Activated B cell treated with CpG ODN at 0.5 μM for 24 hours (primary cell): ENCODE measurements at regions of chr7 and their contacts with region 1.

Region 1: GRCh38 chr7:97117372-97118188 is at the start of gene SDHAF3:
- DNase-seq: peak; percentile 96
- ATAC-seq: peak; percentile 87
- H3K4me3 Mint-ChIP-seq: peak within 1 kb of the TSS; percentile 95
- H3K27ac Mint-ChIP-seq: peak within 1 kb of the TSS; percentile 96
- H3K4me1 Mint-ChIP-seq: peaks cover 41% of the 10 kb centered on the region
- H3K27me3 Mint-ChIP-seq: no peaks in the 10 kb centered on the region
- CTCF ChIP-seq: no peak
- total RNA-seq, gene SDHAF3: 20.6 and 24.2 TPM in 2 replicates

Region 2: DNA sequence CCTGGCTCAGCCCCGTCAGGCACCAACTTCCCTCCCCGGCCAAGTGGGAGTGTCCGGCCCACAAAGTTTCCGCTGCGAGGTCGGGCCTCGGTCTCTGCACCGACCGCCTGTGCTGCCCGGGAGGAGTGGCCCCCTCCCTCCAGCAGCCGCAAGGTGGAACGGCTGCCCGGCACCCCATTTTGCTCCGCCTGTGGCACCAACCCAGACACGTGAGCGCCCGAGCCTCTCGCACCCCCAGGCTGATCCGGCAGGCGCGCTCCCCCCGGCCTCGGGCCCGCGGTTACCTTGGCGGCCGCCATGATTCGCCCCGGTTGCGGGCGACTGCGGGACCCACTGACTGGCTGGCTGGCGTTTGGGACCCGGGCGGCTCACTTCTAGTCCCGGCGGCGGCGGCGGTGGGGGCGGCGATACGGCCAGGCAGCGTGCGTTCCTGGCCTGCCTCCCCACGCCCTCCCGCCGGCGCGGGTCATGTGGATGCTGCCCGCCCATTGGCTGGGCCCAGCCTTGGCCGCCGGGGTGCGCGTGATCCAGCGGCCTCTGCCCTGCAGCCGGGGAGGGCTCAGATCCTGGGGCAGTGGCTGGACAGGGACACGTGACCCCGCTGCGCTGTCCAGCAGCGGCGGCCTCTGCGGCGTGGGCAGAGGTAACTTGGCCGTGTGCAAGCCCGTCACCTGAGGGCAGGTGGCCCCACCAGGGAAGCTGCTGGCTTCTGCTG is 795.8 kb before region 1 on chr7 and contains the start of gene SLC25A13:
- CTCF ChIA-PET with region 1: no interaction called
- POLR2A ChIA-PET with region 1: no interaction called
- intact Hi-C with region 1: loop called (anchors 5 kb)
- DNase-seq: peak; percentile 69
- ATAC-seq: peak; percentile 71
- H3K4me3 Mint-ChIP-seq: peak within 1 kb of the TSS; percentile 90
- H3K27ac Mint-ChIP-seq: peak within 1 kb of the TSS; percentile 88
- H3K4me1 Mint-ChIP-seq: peaks cover 41% of the 10 kb centered on the region
- H3K27me3 Mint-ChIP-seq: no peaks in the 10 kb centered on the region
- CTCF ChIP-seq: no peak
- total RNA-seq, gene SLC25A13: 28.5 and 29.1 TPM in 2 replicates

Region 3: GRCh38 chr7:96942112-96942511 is 175.5 kb before region 1 on chr7:
- CTCF ChIA-PET with region 1: no interaction called
- POLR2A ChIA-PET with region 1: no interaction called
- intact Hi-C with region 1: no loop called
- DNase-seq: no peak
- ATAC-seq: no peak
- H3K4me3 Mint-ChIP-seq: no peak overlapping the region
- H3K27ac Mint-ChIP-seq: no peak overlapping the region
- H3K4me1 Mint-ChIP-seq: no peaks in the 10 kb centered on the region
- H3K27me3 Mint-ChIP-seq: peaks cover 2% of the 10 kb centered on the region
- CTCF ChIP-seq: no peak

Region 4: GRCh38 chr7:97104719-97105238 is 12.8 kb before region 1 on chr7:
- CTCF ChIA-PET with region 1: interaction called, 13 read pairs
- POLR2A ChIA-PET with region 1: no interaction called
- intact Hi-C with region 1: no loop called
- DNase-seq: peak; percentile 74
- ATAC-seq: peak; percentile 94
- H3K4me3 Mint-ChIP-seq: no peak overlapping the region
- H3K27ac Mint-ChIP-seq: no peak overlapping the region
- H3K4me1 Mint-ChIP-seq: no peaks in the 10 kb centered on the region
- H3K27me3 Mint-ChIP-seq: peaks cover 16% of the 10 kb centered on the region
- CTCF ChIP-seq: peak; percentile 72

Region 5: GRCh38 chr7:97226541-97226940 is 109.0 kb after region 1 on chr7:
- CTCF ChIA-PET with region 1: no interaction called
- POLR2A ChIA-PET with region 1: no interaction called
- intact Hi-C with region 1: no loop called
- DNase-seq: no peak
- ATAC-seq: no peak
- H3K4me3 Mint-ChIP-seq: no peak overlapping the region
- H3K27ac Mint-ChIP-seq: no peak overlapping the region
- H3K4me1 Mint-ChIP-seq: no peaks in the 10 kb centered on the region
- H3K27me3 Mint-ChIP-seq: peaks cover 2% of the 10 kb centered on the region
- CTCF ChIP-seq: no peak

Region 6: GRCh38 chr7:97872025-97872669 is 754.6 kb after region 1 on chr7 and contains the start of gene ASNS:
- CTCF ChIA-PET with region 1: no interaction called
- POLR2A ChIA-PET with region 1: interaction called, 52 read pairs
- intact Hi-C with region 1: loop called (anchors 1 kb)
- DNase-seq: peak; percentile 86
- ATAC-seq: peak; percentile 92
- H3K4me3 Mint-ChIP-seq: peak within 1 kb of the TSS; percentile 89
- H3K27ac Mint-ChIP-seq: peak within 1 kb of the TSS; percentile 90
- H3K4me1 Mint-ChIP-seq: peaks cover 13% of the 10 kb centered on the region
- H3K27me3 Mint-ChIP-seq: no peaks in the 10 kb centered on the region
- CTCF ChIP-seq: no peak
- total RNA-seq, gene ASNS: 92.1 and 101 TPM in 2 replicates

Region 7: GRCh38 chr7:98280791-98281756 is 1163.5 kb after region 1 on chr7 and contains the start of gene BRI3:
- CTCF ChIA-PET with region 1: no interaction called
- POLR2A ChIA-PET with region 1: no interaction called
- intact Hi-C with region 1: loop called (anchors 10 kb)
- DNase-seq: peak; percentile 86
- ATAC-seq: peak; percentile 82
- H3K4me3 Mint-ChIP-seq: peak within 1 kb of the TSS; percentile 86
- H3K27ac Mint-ChIP-seq: peak within 1 kb of the TSS; percentile 75
- H3K4me1 Mint-ChIP-seq: peaks cover 36% of the 10 kb centered on the region
- H3K27me3 Mint-ChIP-seq: no peaks in the 10 kb centered on the region
- CTCF ChIP-seq: no peak
- total RNA-seq, gene BRI3: 53.7 and 55.9 TPM in 2 replicates

Region 8: GRCh38 chr7:98878365-98879165 is 1761.0 kb after region 1 on chr7 and contains the start of gene TRRAP:
- CTCF ChIA-PET with region 1: no interaction called
- POLR2A ChIA-PET with region 1: no interaction called
- intact Hi-C with region 1: loop called (anchors 2 kb)
- DNase-seq: peak; percentile 80
- ATAC-seq: peak; percentile 81
- H3K4me3 Mint-ChIP-seq: peak within 1 kb of the TSS; percentile 91
- H3K27ac Mint-ChIP-seq: peak within 1 kb of the TSS; percentile 93
- H3K4me1 Mint-ChIP-seq: peaks cover 19% of the 10 kb centered on the region
- H3K27me3 Mint-ChIP-seq: peaks cover 3% of the 10 kb centered on the region
- CTCF ChIP-seq: peak; percentile 82
- total RNA-seq, gene TRRAP: 73.9 and 77.9 TPM in 2 replicates